ENCODE measurements at regions of chr1 and their contacts with region 1.

Region 1: GRCh38 chr1:62849032-62849431 is 65.1 kb downstream of the ATG4C start:
- DNase-seq: peak; percentile 31
- H3K4me3 ChIP-seq: no peak overlapping the region
- H3K27ac ChIP-seq: no peak overlapping the region
- H3K4me1 ChIP-seq: no peaks in the 10 kb centered on the region
- H3K27me3 ChIP-seq: no peaks in the 10 kb centered on the region
- CTCF ChIP-seq: peak; percentile 43

Region 2: DNA sequence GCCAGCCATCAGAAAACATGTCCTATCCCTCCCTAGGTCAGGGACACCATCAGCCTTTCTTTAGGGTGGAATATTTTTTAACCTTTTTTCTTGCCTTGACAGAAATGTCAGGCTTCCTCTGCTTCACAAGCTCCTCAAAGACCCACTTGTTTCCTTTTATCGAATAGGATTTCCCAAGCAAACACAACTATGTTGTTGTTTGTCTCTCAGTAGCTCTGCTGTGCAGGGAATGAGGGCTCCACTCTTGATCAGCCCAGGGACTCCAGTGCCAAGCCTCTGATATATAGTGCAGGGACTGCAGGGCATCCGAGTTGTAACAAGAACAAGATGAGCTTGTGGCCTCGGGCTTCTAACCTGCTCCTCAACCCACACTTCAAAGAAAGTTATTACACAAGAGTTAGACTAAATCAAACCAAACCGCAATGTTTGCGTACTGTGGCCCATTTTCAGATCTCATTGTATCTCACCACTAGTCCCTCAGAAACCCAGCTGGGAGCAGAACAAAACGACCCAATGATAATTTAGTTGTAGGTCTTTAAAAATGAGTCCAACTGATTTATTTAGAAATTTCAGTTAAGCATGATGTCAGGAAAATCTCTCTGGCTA is 43.0 kb after region 1 on chr1:
- CTCF ChIA-PET with region 1: no interaction called
- POLR2A ChIA-PET with region 1: no interaction called
- intact Hi-C with region 1: no loop called
- DNase-seq: no peak
- H3K4me3 ChIP-seq: no peak overlapping the region
- H3K27ac ChIP-seq: no peak overlapping the region
- H3K4me1 ChIP-seq: no peaks in the 10 kb centered on the region
- H3K27me3 ChIP-seq: no peaks in the 10 kb centered on the region
- CTCF ChIP-seq: no peak

Region 3: DNA sequence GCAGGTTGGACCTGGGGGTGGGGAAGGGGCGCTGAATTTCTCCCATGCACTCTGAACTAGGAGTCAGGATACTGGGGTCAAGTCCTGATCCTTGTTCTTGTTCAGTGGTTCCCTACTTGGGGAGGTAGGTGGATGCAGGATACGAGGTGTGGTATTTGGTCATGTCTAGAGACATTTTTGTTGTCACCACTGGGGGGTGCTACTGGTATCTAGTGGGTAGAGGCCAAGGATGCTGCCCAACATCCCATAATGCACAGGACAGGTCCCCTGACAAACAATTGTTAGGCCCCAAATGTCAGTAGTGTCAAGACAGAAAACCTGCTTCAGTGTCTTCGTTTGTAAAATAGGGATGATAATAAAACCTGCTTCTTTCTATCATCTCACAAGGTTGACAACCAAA is 214.3 kb after region 1 on chr1:
- CTCF ChIA-PET with region 1: no interaction called
- POLR2A ChIA-PET with region 1: no interaction called
- intact Hi-C with region 1: no loop called
- DNase-seq: peak; percentile 6
- H3K4me3 ChIP-seq: no peak overlapping the region
- H3K27ac ChIP-seq: no peak overlapping the region
- H3K4me1 ChIP-seq: no peaks in the 10 kb centered on the region
- H3K27me3 ChIP-seq: no peaks in the 10 kb centered on the region
- CTCF ChIP-seq: peak; percentile 41

Region 4: DNA sequence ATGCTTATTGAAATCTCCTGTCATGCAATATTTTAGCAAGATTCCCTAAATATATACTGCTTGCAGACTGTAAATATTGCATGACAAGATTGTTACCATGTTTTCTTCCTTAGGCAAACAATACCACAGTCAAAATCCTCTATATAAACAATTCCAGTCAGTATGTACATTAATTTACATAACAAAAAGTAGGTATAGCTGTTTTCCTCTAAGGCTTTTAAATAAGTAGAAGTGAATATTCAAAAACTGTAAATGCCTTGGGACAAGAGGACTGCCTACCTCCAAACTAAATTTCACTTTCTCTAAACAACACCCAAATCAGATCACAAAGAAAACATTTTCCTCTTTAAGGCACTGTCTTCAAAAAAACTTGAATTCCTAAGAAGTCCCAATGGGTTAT is 456.0 kb after region 1 on chr1:
- CTCF ChIA-PET with region 1: interaction called, 12 read pairs
- POLR2A ChIA-PET with region 1: no interaction called
- intact Hi-C with region 1: no loop called
- DNase-seq: no peak
- H3K4me3 ChIP-seq: no peak overlapping the region
- H3K27ac ChIP-seq: no peak overlapping the region
- H3K4me1 ChIP-seq: no peaks in the 10 kb centered on the region
- H3K27me3 ChIP-seq: no peaks in the 10 kb centered on the region
- CTCF ChIP-seq: no peak